GM12878 (cell line): ENCODE measurements at regions of chr22 and their contacts with region 1.

Region 1: DNA sequence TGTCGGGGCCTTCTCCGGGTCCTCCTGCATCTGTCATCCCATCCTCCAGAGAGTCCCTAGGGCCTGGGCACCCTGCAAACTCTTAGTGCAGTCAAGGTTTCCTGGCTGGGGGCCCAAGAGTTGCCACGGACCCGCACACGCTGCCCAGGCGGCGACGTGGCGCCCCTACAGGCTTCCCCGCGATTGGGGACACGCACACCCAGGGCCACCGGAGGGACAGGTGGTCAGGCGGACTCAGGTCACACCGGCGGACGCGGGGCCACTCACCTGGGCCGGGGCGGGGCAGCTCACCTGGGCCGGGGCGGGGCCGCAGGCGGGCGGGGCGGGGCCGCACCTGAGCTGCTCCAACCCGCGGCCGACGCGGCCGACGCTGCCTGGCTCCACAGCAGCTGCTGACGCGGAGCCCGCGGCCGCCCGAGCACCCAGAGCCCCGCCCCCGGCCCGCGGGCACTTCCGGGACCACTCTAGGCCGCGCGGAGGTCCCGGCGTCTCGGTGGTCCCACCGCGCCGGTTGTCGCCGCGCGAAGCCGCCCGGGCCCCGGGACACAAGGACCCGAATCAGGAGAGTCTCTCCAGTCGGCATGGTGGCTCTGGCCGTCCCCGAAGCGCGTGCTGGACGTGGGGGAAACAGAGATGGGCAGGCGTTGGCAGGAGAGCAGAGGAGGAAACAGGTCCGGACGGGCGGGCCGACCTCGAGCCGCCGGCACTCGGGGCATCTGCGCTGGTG is at the start of gene ZNF70:
- DNase-seq: no peak
- ATAC-seq: peak; percentile 96
- H3K4me3 ChIP-seq: peak within 1 kb of the TSS; percentile 85
- H3K27ac ChIP-seq: peak within 1 kb of the TSS; percentile 88
- H3K4me1 ChIP-seq: peaks cover 30% of the 10 kb centered on the region
- H3K27me3 ChIP-seq: no peaks in the 10 kb centered on the region
- CTCF ChIP-seq: peak in 2 of 3 experiments; percentile 13 to 46; a peak in 1 of 6 replicates
- EP300 ChIP-seq: no peak
- POLR2A ChIP-seq: peak; percentile 80; the same call in 1 of the 2 replicates
- RAD21 ChIP-seq: peak; percentile 18; the same call in 1 of the 2 replicates
- polyA plus RNA-seq, gene ZNF70: 0.15 to 0.21 TPM

Region 2: DNA sequence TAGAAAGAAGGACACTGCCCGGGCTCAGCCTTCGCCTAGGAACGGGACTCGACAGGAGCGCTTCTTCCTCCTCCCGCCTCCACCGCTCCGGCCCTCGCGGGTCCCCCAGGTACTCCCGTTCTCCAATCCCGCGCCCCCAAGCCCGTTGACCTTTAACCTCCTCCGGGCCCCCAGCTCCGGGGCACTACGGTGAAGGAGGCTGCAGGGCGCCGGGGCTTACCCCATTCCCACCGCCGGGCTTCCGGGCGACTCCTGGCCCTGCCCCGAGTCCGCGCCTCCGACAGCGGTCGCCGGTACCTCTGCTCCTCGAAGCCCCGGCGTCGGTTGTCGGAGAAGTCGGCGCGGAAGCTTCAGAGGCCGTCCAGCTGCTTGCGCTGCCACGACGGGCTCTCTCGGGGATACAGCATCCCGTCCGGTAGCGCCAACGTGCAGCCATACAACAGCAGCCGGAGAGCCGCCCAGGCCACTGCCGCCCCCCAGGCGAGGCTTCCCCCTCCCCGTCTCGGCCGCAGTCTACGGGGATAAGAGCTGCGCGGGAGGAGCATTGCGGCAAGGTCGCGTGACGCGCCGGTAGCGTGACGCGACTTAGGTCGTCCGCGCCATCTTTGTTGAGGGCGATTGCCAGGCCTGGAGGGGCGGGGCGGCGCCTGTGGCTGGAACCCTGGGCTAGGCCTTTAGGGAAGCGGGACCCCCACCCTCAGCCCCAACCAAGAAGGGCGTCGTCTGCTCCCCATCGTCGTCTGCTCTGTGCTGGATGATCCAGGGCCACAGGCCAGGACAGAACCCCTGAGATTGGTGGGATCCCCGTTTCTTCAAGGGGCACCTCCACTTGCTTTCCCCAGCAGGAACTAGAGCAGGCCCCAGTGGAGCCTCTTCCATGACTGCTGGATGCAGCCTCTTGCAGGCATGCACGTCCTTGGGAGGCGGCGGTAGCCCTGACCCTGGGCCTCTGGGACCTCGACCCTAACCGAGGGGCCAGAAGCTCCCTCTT is 33.8 kb before region 1 on chr22:
- CTCF ChIA-PET with region 1: interaction called, 4 read pairs
- POLR2A ChIA-PET with region 1: interaction called, 12 read pairs
- RAD21 ChIA-PET with region 1: interaction called, 7 read pairs
- SMC1A ChIA-PET with region 1: no interaction called
- in situ Hi-C with region 1: no loop called
- intact Hi-C with region 1: no loop called
- DNase-seq: peak; percentile 53
- ATAC-seq: peak; percentile 95
- H3K4me3 ChIP-seq: peak overlapping the region; percentile 83
- H3K27ac ChIP-seq: peak overlapping the region; percentile 64
- H3K4me1 ChIP-seq: peaks cover 14% of the 10 kb centered on the region
- H3K27me3 ChIP-seq: no peaks in the 10 kb centered on the region
- CTCF ChIP-seq: no peak
- EP300 ChIP-seq: peak in 1 of 2 experiments; percentile 10; a peak in 1 of 4 replicates
- POLR2A ChIP-seq: peak; percentile 97
- RAD21 ChIP-seq: no peak

Region 3: GRCh38 chr22:23781511-23782315 is 30.8 kb after region 1 on chr22:
- CTCF ChIA-PET with region 1: no interaction called
- POLR2A ChIA-PET with region 1: no interaction called
- RAD21 ChIA-PET with region 1: no interaction called
- SMC1A ChIA-PET with region 1: no interaction called
- in situ Hi-C with region 1: no loop called
- intact Hi-C with region 1: no loop called
- DNase-seq: no peak
- ATAC-seq: no peak
- H3K4me3 ChIP-seq: no peak overlapping the region
- H3K27ac ChIP-seq: no peak overlapping the region
- H3K4me1 ChIP-seq: peaks cover 5% of the 10 kb centered on the region
- H3K27me3 ChIP-seq: peaks cover 0 to 2% of the 10 kb centered on the region in 2 experiments; a peak in 1 of 4 replicates
- CTCF ChIP-seq: no peak
- EP300 ChIP-seq: no peak
- POLR2A ChIP-seq: no peak
- RAD21 ChIP-seq: no peak